Mammary epithelial cell (primary cell): ENCODE measurements at regions of chr13 and their contacts with region 1.

Region 1: DNA sequence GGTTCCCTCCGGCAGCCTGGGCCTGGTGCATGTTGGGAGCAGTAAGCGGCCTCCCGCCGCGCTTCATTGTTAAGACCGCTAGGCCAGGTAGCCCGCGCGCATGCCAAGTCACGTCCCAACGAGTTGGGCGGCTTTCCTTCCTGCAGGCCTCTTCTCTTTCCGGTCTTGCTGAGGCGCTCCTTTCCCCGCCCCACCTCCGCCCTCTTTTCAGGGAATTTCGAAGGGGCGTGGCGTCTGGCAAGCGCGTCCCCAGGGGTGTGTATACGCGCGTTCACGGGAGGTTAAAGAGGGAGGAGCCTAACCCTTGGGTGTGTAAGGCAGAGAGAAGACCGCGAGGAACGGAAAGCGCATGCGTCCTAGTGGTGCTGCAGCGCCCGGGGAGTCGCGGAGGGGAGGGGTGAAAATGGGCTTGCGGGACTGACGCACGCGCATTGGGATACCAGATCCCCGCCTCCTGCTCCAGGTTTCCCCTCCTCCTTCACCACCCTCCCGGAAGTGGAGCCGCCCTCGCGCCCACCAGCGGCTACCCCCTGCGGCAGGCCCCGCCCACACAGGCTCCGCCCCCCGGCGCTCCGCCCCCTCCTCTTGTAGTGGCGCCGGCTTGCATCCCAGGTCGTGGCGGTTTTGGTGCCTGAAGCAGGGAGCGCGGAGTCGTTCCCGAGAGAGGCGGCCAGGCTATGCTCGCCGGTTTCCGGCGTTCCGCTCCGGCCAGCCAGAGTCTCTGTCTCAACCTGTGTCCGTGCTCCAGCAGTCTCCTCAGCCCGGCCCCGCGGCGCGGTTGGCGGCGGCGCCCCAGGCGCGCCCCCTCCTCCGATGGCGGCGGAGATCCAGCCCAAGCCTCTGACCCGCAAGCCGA is at the start of gene WDFY2:
- DNase-seq: peak; percentile 100
- H3K4me3 ChIP-seq: peak within 1 kb of the TSS; percentile 89 to 96 (median 96)
- H3K27ac ChIP-seq: peak within 1 kb of the TSS; percentile 88
- H3K4me1 ChIP-seq: peaks cover 7% of the 10 kb centered on the region
- H3K27me3 ChIP-seq: no peaks in the 10 kb centered on the region
- CTCF ChIP-seq: no peak
- total RNA-seq, gene WDFY2: 20.7 to 32.9 TPM

Region 2: GRCh38 chr13:51405176-51405575 is 178.9 kb before region 1 on chr13:
- CTCF ChIA-PET with region 1: no interaction called
- dilution Hi-C with region 1: no loop called
- in situ Hi-C with region 1: no loop called
- intact Hi-C with region 1: no loop called
- DNase-seq: no peak
- H3K4me3 ChIP-seq: no peak overlapping the region
- H3K27ac ChIP-seq: no peak overlapping the region
- H3K4me1 ChIP-seq: no peaks in the 10 kb centered on the region
- H3K27me3 ChIP-seq: no peaks in the 10 kb centered on the region
- CTCF ChIP-seq: no peak

Region 3: GRCh38 chr13:51714663-51715168 is 130.6 kb after region 1 on chr13:
- CTCF ChIA-PET with region 1: no interaction called
- dilution Hi-C with region 1: no loop called
- in situ Hi-C with region 1: no loop called
- intact Hi-C with region 1: loop called (anchors 2 kb)
- DNase-seq: peak; percentile 88
- H3K4me3 ChIP-seq: no peak overlapping the region
- H3K27ac ChIP-seq: peak overlapping the region; percentile 97
- H3K4me1 ChIP-seq: peaks cover 25% of the 10 kb centered on the region
- H3K27me3 ChIP-seq: no peaks in the 10 kb centered on the region
- CTCF ChIP-seq: no peak

Region 4: GRCh38 chr13:51729866-51730546 is 145.9 kb after region 1 on chr13:
- CTCF ChIA-PET with region 1: no interaction called
- dilution Hi-C with region 1: no loop called
- in situ Hi-C with region 1: no loop called
- intact Hi-C with region 1: loop called (anchors 2 kb)
- DNase-seq: peak; percentile 77
- H3K4me3 ChIP-seq: no peak overlapping the region
- H3K27ac ChIP-seq: peak overlapping the region; percentile 79
- H3K4me1 ChIP-seq: peaks cover 33% of the 10 kb centered on the region
- H3K27me3 ChIP-seq: no peaks in the 10 kb centered on the region
- CTCF ChIP-seq: no peak

Region 5: GRCh38 chr13:51814825-51815650 is 230.9 kb after region 1 on chr13:
- CTCF ChIA-PET with region 1: no interaction called
- dilution Hi-C with region 1: no loop called
- in situ Hi-C with region 1: no loop called
- intact Hi-C with region 1: no loop called
- DNase-seq: peak; percentile 67
- H3K4me3 ChIP-seq: peak overlapping the region in 2 of 3 experiments; percentile 22 to 34
- H3K27ac ChIP-seq: no peak overlapping the region
- H3K4me1 ChIP-seq: peaks cover 4% of the 10 kb centered on the region
- H3K27me3 ChIP-seq: no peaks in the 10 kb centered on the region
- CTCF ChIP-seq: peak; percentile 85 to 86